ENCODE measurements at regions of chr1 and their contacts with region 1.

Region 1: DNA sequence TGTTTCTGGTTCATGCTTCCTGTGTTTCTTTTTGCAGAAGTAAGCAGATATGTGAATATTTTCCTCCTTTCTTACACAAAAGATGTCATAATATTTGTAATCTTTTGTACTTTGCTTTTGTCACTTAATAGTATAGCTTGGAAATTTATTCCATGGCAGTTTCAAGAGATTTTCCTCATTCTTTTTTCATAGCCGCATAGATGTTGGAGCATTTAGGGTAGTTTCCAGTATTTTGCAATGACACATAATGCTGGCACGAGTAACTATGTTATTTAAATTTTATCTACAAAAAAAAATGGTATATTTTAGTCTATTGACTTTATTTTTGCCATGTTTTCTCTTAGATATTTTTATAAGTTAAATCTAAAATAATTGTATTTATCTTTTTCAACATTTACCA is 40.7 kb downstream of the AGO3 start:
- DNase-seq: no peak

Region 2: DNA sequence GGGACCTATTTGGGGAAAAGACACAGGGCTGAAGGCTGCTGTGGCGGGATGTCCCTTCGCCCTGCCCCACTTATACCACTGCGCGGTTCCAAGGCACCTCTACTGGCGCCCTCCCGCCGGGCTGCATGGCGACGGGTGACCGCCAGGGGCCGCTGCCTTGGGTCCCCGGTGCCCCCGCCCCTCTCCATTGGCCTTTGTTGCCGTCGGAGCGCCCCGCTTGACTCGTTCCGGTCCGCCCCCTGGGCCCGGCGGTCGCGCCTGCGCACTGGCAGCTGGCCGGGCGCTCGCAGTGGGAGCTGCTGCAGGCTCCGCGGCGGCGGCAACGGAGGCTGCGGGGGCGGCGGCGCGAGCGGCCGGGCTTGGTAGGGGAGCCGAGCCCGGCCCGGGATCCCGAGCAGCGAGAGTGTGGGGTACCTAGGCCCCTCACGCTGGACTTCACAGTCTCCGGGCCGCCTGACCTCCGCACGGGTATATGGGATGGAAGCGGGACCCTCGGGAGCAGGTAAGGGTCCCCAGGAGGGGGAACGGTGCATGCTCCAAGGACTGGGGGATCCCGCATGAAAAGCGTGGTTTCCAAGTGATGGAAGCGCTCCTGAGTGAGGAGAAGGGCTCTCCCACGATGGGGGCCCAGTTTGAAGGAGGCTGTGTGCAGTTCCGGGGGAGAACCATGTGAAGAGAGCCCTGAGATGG is 88.5 kb before region 1 on chr1 and contains the start of gene AGO1:
- intact Hi-C with region 1: loop called in 1 of 2 experiments (anchors 10 kb)
- DNase-seq: peak; percentile 98
- total RNA-seq, gene AGO1: 25.3 to 27.9 TPM

Measured in posterior vena cava (tissue), 2 donors.